ENCODE measurements at regions of chr16 and their contacts with region 1.

Region 1: GRCh38 chr16:86517652-86518258 is 7.4 kb downstream of the FOXF1 start:
- DNase-seq: peak; percentile 46
- ATAC-seq: peak; percentile 39
- H3K4me3 Mint-ChIP-seq: no peak overlapping the region
- H3K27ac Mint-ChIP-seq: no peak overlapping the region
- H3K4me1 Mint-ChIP-seq: peaks cover 3% of the 10 kb centered on the region
- H3K27me3 Mint-ChIP-seq: peaks cover 79% of the 10 kb centered on the region

Region 2: GRCh38 chr16:86044241-86044671 is 473.5 kb before region 1 on chr16:
- CTCF ChIA-PET with region 1: interaction called, 10 read pairs
- DNase-seq: peak; percentile 46
- ATAC-seq: no peak
- H3K4me3 Mint-ChIP-seq: no peak overlapping the region
- H3K27ac Mint-ChIP-seq: no peak overlapping the region
- H3K4me1 Mint-ChIP-seq: peaks cover 13% of the 10 kb centered on the region
- H3K27me3 Mint-ChIP-seq: peaks cover 39% of the 10 kb centered on the region

Region 3: GRCh38 chr16:86542766-86543755 is 25.3 kb after region 1 on chr16:
- CTCF ChIA-PET with region 1: no interaction called
- DNase-seq: no peak
- ATAC-seq: no peak
- H3K4me3 Mint-ChIP-seq: no peak overlapping the region
- H3K27ac Mint-ChIP-seq: no peak overlapping the region
- H3K4me1 Mint-ChIP-seq: no peaks in the 10 kb centered on the region
- H3K27me3 Mint-ChIP-seq: no peaks in the 10 kb centered on the region

Measured in activated CD8-positive, alpha-beta memory T cell treated with anti-CD3 and anti-CD28 coated beads, Interleukin-2, amount 10 ng/mL, durations not matched to agents 7 days and 5 days (primary cell).